HepG2 (cell line): ENCODE measurements at regions of chr16 and their contacts with region 1.

Region 1: DNA sequence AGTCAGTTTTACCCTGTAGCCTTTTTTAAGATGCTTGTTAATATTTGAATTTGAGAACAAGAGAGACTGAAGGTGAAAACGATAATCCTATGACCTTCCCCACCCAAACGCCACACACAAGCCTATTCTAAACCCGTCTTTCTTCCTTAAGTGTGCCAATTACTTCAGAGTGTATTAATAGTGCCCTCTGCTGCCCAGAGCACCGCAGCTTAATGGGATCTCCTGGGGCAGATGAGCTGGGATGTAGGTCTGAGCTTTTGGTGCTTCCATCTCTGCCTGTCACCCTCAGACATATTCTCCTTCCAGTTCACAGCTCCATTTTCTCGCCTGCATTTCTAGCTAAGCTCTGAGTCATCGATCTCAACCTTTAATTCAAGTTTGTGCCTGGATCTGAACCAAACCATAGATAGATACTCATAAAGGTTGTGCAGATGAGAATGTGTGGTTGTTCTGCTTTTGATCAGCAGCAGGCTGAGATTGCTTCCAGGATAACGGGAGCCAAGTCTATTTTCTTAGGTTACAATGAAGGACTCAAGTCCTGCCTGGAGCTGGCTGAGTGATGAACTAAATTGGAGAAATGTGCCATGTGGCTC is 46.4 kb upstream of the CDH13 start:
- DNase-seq: peak; percentile 16
- ATAC-seq: peak; percentile 75
- H3K4me3 ChIP-seq: no peak overlapping the region
- H3K27ac ChIP-seq: no peak overlapping the region
- H3K4me1 ChIP-seq: no peaks in the 10 kb centered on the region
- H3K27me3 ChIP-seq: no peaks in the 10 kb centered on the region
- CTCF ChIP-seq: peak; percentile 66
- EP300 ChIP-seq: no peak
- POLR2A ChIP-seq: no peak
- RAD21 ChIP-seq: no peak

Region 2: GRCh38 chr16:82368041-82368440 is 212.4 kb before region 1 on chr16:
- CTCF ChIA-PET with region 1: interaction called, 3 read pairs
- POLR2A ChIA-PET with region 1: no interaction called
- in situ Hi-C with region 1: no loop called
- intact Hi-C with region 1: loop called (anchors 1 kb)
- DNase-seq: peak; percentile 40
- ATAC-seq: peak; percentile 94
- H3K4me3 ChIP-seq: no peak overlapping the region
- H3K27ac ChIP-seq: no peak overlapping the region
- H3K4me1 ChIP-seq: no peaks in the 10 kb centered on the region
- H3K27me3 ChIP-seq: no peaks in the 10 kb centered on the region; a peak in 1 of 5 replicates
- CTCF ChIP-seq: peak; percentile 50
- EP300 ChIP-seq: no peak
- POLR2A ChIP-seq: no peak
- RAD21 ChIP-seq: 0 out of 2 replicates have a peak, but pooled peaks have one; percentile 22

Region 3: GRCh38 chr16:82456683-82457082 is 123.7 kb before region 1 on chr16:
- CTCF ChIA-PET with region 1: no interaction called
- POLR2A ChIA-PET with region 1: no interaction called
- in situ Hi-C with region 1: no loop called
- intact Hi-C with region 1: loop called (anchors 10 kb)
- DNase-seq: peak; percentile 50
- ATAC-seq: peak; percentile 99
- H3K4me3 ChIP-seq: no peak overlapping the region
- H3K27ac ChIP-seq: no peak overlapping the region
- H3K4me1 ChIP-seq: no peaks in the 10 kb centered on the region
- H3K27me3 ChIP-seq: peaks cover 0 to 13% of the 10 kb centered on the region in 2 experiments; a peak in 2 of 5 replicates
- CTCF ChIP-seq: peak; percentile 84
- EP300 ChIP-seq: no peak
- POLR2A ChIP-seq: no peak
- RAD21 ChIP-seq: peak; percentile 66

Region 4: GRCh38 chr16:82560805-82561325 is 19.5 kb before region 1 on chr16:
- CTCF ChIA-PET with region 1: no interaction called
- POLR2A ChIA-PET with region 1: no interaction called
- in situ Hi-C with region 1: no loop called
- intact Hi-C with region 1: no loop called
- DNase-seq: no peak
- ATAC-seq: no peak
- H3K4me3 ChIP-seq: no peak overlapping the region
- H3K27ac ChIP-seq: no peak overlapping the region
- H3K4me1 ChIP-seq: no peaks in the 10 kb centered on the region
- H3K27me3 ChIP-seq: peaks cover 0 to 1% of the 10 kb centered on the region in 2 experiments; a peak in 1 of 5 replicates
- CTCF ChIP-seq: no peak
- EP300 ChIP-seq: no peak
- POLR2A ChIP-seq: no peak
- RAD21 ChIP-seq: no peak